ENCODE measurements at regions of chr17 and their contacts with region 1.

Region 1: GRCh38 chr17:49575579-49576087 is at the start of gene NXPH3:
- DNase-seq: peak; percentile 62 to 86 (median 77)
- ATAC-seq: peak; percentile 2 to 65 (median 33)
- H3K4me3 ChIP-seq: peak within 1 kb of the TSS; percentile 61 to 92 (median 68)
- H3K27ac ChIP-seq: peak within 1 kb of the TSS in 11 of 12 donors; percentile 13 to 89 (median 71)
- H3K4me1 ChIP-seq: peaks cover 4 to 45% (median 23%) of the 10 kb centered on the region in 12 donors
- H3K27me3 ChIP-seq: peaks cover 0 to 27% (median 0%) of the 10 kb centered on the region in 9 donors
- CTCF ChIP-seq: peak; percentile 18 to 84 (median 59)
- POLR2A ChIP-seq: no peak
- total RNA-seq, gene NXPH3: 2.5 to 6.8 (median 4.5) TPM

Region 2: DNA sequence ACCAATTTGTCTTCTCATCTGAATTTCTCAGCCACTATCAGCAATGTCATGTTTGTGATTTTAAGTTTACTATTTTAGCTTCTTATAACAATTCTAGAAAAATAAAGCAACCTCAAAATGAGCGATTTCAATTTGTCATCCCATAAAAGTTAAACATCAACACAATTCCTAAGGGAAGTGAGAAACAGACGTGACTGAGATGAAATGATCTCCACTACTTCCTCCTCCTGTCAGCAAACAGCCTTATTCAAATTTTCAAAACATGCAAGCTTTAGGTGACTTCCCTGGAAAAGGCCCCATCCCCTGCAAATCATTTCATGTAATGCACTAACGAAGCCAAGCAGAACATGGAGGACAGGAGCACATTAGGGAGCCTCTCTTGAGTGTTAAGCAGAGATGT is 278.5 kb before region 1 on chr17:
- intact Hi-C with region 1: no loop called
- DNase-seq: no peak
- ATAC-seq: no peak
- H3K4me3 ChIP-seq: no peak overlapping the region
- H3K27ac ChIP-seq: no peak overlapping the region
- H3K4me1 ChIP-seq: no peaks in the 10 kb centered on the region
- H3K27me3 ChIP-seq: no peaks in the 10 kb centered on the region
- CTCF ChIP-seq: no peak
- POLR2A ChIP-seq: no peak

Region 3: GRCh38 chr17:49597928-49598655 is 22.5 kb after region 1 on chr17:
- intact Hi-C with region 1: no loop called
- DNase-seq: no peak
- ATAC-seq: peak in 2 of 4 donors; percentile 18 to 59
- H3K4me3 ChIP-seq: no peak overlapping the region
- H3K27ac ChIP-seq: peak overlapping the region in 11 of 12 donors; percentile 11 to 60 (median 41)
- H3K4me1 ChIP-seq: peaks cover 0 to 40% (median 24%) of the 10 kb centered on the region in 12 donors
- H3K27me3 ChIP-seq: no peaks in the 10 kb centered on the region
- CTCF ChIP-seq: no peak
- POLR2A ChIP-seq: no peak

Region 4: DNA sequence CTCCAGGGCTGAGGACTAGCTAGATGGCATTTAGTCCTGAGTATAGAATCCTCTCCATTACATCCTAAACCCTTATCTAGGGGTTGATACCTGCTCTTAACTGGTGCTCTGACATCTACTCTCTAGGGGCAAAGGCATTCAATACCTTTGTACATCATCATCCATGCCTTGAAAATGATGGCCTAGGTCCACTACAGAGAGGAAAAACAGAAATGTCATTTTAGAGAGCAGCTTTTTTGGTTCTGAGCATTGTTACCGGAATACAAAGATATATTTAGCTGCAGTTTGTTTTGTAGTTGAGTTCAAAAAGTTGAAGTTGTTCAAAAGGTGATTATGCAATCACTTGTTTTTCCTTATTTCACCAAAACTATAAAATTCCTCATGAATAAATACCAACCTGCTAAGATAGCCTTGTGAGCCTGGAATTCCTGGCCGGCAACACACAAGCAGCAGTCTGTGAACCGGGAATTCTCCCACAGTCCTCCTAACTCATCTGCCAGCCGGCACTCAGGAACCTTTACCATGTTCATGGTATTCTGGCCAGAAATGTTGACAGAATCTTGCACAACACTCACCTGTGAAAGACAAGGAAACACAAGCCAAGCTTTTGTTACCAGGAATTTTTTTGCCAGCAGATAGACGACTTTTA is 35.4 kb after region 1 on chr17:
- intact Hi-C with region 1: loop called in 4 of 10 experiments (anchors 5 kb)
- DNase-seq: no peak
- ATAC-seq: peak in 1 of 4 donors; percentile 18
- H3K4me3 ChIP-seq: no peak overlapping the region
- H3K27ac ChIP-seq: peak overlapping the region in 2 of 12 donors; percentile 61 to 73
- H3K4me1 ChIP-seq: peaks cover 0 to 35% (median 20%) of the 10 kb centered on the region in 12 donors
- H3K27me3 ChIP-seq: no peaks in the 10 kb centered on the region
- CTCF ChIP-seq: no peak
- POLR2A ChIP-seq: no peak

Region 5: DNA sequence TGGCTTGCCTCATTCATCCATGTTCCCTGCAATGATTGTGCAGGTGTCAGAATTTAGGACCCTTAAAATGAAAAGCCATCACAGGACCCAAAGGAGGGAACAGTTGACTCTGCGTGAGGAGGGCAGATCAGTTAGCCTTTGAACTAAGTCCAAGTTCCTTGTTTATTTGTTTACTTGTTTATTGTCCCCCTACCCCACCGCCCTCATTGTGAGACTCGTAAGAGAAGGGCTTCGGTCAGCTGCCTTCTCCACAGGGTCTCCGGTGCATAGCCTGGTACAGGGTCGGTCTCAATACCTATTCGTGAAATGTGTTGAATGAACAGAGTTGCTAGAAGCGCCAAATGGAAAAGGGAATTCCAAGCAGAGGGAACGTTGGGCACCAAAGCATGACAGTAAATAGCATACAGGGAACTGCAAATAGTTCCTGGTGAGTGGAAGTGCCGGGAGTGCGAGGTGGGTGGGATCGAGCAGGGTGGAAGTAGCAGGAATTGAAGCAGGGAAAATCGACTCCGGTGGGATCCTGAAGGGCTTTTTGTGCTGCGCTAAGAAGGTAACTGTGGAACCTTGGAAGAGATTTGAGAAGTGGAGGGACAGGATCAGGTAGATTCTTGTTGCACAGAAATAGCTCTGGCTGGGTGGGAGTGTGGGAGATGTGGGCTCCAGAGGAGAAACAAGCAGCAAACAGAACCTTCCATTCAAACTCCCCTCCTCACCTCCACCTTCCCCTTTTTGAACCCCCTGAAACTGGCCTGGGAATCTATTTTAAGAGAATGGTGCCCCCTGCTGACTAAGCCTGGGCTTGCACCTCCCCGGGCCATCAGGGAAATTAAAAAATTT is 119.4 kb after region 1 on chr17:
- intact Hi-C with region 1: loop called in 7 of 10 experiments (anchors 1 to 2 kb)
- DNase-seq: peak in 3 of 5 donors; percentile 39 to 58 (median 52)
- ATAC-seq: no peak
- H3K4me3 ChIP-seq: peak overlapping the region in 1 of 12 donors; percentile 16
- H3K27ac ChIP-seq: no peak overlapping the region
- H3K4me1 ChIP-seq: peaks cover 0 to 47% (median 26%) of the 10 kb centered on the region in 12 donors
- H3K27me3 ChIP-seq: no peaks in the 10 kb centered on the region
- CTCF ChIP-seq: peak; percentile 81 to 97 (median 92)
- POLR2A ChIP-seq: no peak

Region 6: GRCh38 chr17:49788478-49789242 is 213.0 kb after region 1 on chr17 and contains the start of gene KAT7:
- intact Hi-C with region 1: loop called in 3 of 10 experiments (anchors 5 to 10 kb)
- DNase-seq: peak; percentile 99 to 100 (median 99)
- ATAC-seq: peak; percentile 95 to 97 (median 97)
- H3K4me3 ChIP-seq: peak within 1 kb of the TSS; percentile 77 to 100 (median 96)
- H3K27ac ChIP-seq: peak within 1 kb of the TSS; percentile 89 to 100 (median 99)
- H3K4me1 ChIP-seq: peaks cover 6 to 60% (median 42%) of the 10 kb centered on the region in 12 donors
- H3K27me3 ChIP-seq: no peaks in the 10 kb centered on the region
- CTCF ChIP-seq: peak in 7 of 12 donors; percentile 9 to 43 (median 25)
- POLR2A ChIP-seq: peak; percentile 38 to 87
- total RNA-seq, gene KAT7: 34.3 to 80.9 (median 56.0) TPM

Region 7: GRCh38 chr17:49843774-49844350 is 268.2 kb after region 1 on chr17:
- intact Hi-C with region 1: no loop called
- DNase-seq: peak in 1 of 5 donors; percentile 24
- ATAC-seq: no peak
- H3K4me3 ChIP-seq: no peak overlapping the region
- H3K27ac ChIP-seq: peak overlapping the region in 2 of 12 donors; percentile 15 to 91
- H3K4me1 ChIP-seq: peaks cover 0 to 46% (median 25%) of the 10 kb centered on the region in 12 donors
- H3K27me3 ChIP-seq: no peaks in the 10 kb centered on the region
- CTCF ChIP-seq: peak in 4 of 12 donors; percentile 22 to 34 (median 24)
- POLR2A ChIP-seq: no peak

Region 8: GRCh38 chr17:50087246-50087911 is 511.7 kb after region 1 on chr17:
- intact Hi-C with region 1: loop called in 1 of 10 experiments (anchors 10 kb)
- DNase-seq: peak; percentile 60 to 86 (median 71)
- ATAC-seq: peak; percentile 66 to 91 (median 87)
- H3K4me3 ChIP-seq: no peak overlapping the region
- H3K27ac ChIP-seq: no peak overlapping the region
- H3K4me1 ChIP-seq: no peaks in the 10 kb centered on the region
- H3K27me3 ChIP-seq: no peaks in the 10 kb centered on the region
- CTCF ChIP-seq: peak in 11 of 12 donors; percentile 92 to 99 (median 97)
- POLR2A ChIP-seq: no peak

Measured in heart left ventricle (tissue), 16 donors.